ENCODE measurements at regions of chr11 and their contacts with region 1.

Region 1: DNA sequence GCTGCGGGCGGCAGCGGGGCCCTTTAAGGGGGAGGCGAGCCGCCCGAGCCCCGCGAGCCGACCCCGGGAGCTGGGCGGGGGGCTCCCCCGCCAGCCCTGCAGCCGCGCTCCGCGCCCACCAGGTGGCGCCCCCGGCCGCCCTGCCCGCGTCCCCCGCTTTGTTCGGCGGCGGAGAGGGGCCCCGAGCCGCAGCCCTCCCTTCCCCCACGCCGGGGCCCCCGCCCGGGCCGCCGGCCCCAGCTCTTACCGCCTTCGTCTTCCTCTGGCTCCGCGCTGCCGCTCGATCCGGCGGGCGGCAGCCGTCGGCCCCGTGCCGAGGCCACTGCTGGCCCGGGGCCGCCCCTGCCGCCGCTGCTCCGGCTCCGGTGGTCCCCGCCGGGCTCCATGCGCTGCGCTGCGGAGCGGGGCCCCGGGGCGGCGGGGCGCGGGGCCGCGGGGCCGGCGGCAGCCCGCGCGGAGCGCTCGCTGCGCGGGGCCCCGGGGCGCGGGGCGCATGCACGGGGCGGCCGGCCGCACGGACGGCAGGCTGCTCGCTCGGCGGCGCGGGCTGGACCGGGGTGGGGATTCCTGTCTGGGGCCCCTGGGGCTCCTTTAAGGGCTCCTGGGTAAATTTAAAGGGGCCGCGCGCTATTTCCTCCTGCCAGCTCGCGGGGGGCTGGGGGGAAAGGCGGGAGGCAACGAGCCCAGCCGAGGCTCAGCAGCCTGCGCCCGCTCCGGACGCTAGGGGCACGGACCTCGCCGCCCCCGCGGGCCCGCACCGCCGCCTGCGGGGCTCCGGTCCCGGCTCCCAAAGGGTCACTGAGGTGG is at the start of gene ZFTA:
- DNase-seq: no peak
- H3K4me3 ChIP-seq: peak within 1 kb of the TSS; percentile 88 to 99 (median 90)
- H3K27ac ChIP-seq: peak within 1 kb of the TSS; percentile 79 to 88
- H3K4me1 ChIP-seq: peaks cover 0 to 16% of the 10 kb centered on the region in 2 donors
- H3K27me3 ChIP-seq: no peaks in the 10 kb centered on the region
- CTCF ChIP-seq: peak in 1 of 3 donors; percentile 89
- POLR2A ChIP-seq: no peak
- total RNA-seq, gene ZFTA: 8.8 to 12.5 (median 9.7) TPM

Region 2: GRCh38 chr11:63938479-63939396 is 170.3 kb after region 1 on chr11 and contains the start of gene NAA40:
- intact Hi-C with region 1: loop called (anchors 2 kb)
- DNase-seq: peak; percentile 85
- H3K4me3 ChIP-seq: peak within 1 kb of the TSS; percentile 68 to 76 (median 74)
- H3K27ac ChIP-seq: peak within 1 kb of the TSS; percentile 76 to 88
- H3K4me1 ChIP-seq: peaks cover 0 to 4% of the 10 kb centered on the region in 2 donors
- H3K27me3 ChIP-seq: no peaks in the 10 kb centered on the region
- CTCF ChIP-seq: peak in 1 of 3 donors; percentile 10
- POLR2A ChIP-seq: no peak
- total RNA-seq, gene NAA40: 5.9 to 27.4 (median 19.7) TPM

Region 3: DNA sequence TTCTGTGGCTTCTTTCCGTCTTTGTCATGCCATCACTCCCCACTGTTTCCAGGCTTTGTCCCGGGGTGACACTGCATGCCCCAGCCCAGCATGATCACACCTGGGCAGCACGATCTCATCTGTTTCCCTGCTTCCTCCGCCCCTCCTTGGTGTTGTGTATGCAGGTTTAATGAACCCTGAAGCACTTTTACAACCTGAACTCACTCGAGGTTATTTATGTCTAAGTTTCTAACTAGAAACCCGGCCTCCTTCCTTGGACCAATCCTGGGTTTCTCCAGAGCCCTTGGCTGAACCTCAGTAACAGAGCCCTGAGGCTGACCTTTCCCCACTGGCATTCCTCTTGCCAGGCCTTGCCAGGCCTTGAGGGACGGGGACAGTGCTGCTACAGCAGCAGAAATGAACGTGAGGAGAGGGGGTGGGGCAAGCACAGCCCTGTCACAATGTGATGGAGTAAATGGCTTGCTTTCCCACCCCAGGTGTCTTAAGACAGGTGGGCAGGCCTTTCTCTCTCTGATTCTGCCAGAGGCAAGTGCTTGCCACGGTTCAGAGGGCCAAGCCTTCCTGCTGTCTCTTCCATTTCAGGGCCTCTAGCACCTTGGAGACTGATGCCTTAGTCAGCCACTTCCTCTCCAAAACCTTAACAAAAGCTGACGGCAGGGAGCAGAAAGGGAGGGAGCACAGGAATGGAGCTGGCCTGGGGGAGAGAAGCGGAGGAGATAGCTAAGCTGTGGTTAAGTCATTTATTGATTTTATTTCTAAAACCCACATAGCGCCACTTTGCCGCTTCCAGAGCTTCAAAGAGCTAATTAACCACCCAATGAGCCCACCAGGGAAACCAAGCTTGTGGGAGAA is 994.5 kb after region 1 on chr11:
- intact Hi-C with region 1: no loop called
- DNase-seq: peak in 1 of 2 donors; percentile 17
- H3K4me3 ChIP-seq: no peak overlapping the region
- H3K27ac ChIP-seq: peak overlapping the region; percentile 61 to 71
- H3K4me1 ChIP-seq: peaks cover 6 to 14% of the 10 kb centered on the region in 2 donors
- H3K27me3 ChIP-seq: no peaks in the 10 kb centered on the region
- CTCF ChIP-seq: no peak
- POLR2A ChIP-seq: no peak

Measured in breast epithelium (tissue), 4 donors.